Motor neuron (in vitro differentiated cells): ENCODE measurements at regions of chrX and their contacts with region 1.

Region 1: DNA sequence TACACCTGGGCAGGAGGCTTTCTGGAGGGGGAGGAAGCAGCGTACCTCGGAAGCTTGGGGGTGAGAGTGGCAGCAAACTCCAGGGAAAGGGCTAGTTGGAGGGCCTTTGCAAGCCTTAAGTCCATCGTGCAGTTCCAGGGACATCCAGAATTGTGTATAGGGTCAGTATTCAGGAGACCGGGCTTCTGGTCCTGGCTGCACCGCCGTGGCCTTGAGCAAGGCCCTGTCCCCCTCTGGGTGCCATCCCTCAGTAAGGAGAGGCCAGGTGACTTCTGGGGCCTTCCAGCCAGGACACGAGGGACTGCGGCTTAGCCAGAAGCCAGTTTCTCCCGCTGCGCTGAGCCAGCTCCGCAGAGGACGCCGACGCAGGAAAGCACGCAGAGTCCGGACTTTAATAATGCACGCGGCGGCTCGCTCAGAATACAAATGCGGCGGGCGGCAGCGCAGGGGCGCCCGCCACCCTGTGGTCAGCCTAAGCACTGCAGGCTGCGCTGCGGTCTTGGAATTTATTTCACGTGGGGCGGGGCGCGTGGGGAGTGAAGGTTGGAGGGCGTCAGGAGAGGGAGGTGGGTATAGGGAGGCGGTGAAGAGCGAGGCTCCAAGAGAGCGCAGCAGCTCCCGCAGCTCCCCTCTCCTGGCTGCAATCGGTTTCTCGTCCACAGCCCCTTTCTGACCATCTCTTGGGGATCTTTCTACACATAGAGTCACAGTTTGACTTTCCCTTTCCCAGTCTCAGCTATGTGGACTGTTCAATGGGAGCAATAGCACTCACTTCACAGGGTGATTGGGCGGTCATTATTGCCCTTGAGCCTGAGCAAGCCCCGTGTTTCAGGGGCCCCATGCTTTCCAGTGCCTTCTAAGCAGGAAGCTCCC is 94.1 kb upstream of the GPR50 start:
- ATAC-seq: peak; percentile 92 to 98 (median 96)
- H3K4me3 ChIP-seq: peak overlapping the region in 3 of 5 donors; percentile 6 to 14 (median 11)
- H3K27ac ChIP-seq: peak overlapping the region in 1 of 2 donors; percentile 79
- H3K4me1 ChIP-seq: peaks cover 18 to 24% of the 10 kb centered on the region in 2 donors

Region 2: GRCh38 chrX:150772150-150772970 is 310.0 kb before region 1 on chrX:
- in situ Hi-C with region 1: loop called in 5 of 9 experiments (anchors 10 to 25 kb)
- ATAC-seq: peak; percentile 95 to 99 (median 98)
- H3K4me3 ChIP-seq: no peak overlapping the region
- H3K27ac ChIP-seq: no peak overlapping the region
- H3K4me1 ChIP-seq: no peaks in the 10 kb centered on the region

Region 3: DNA sequence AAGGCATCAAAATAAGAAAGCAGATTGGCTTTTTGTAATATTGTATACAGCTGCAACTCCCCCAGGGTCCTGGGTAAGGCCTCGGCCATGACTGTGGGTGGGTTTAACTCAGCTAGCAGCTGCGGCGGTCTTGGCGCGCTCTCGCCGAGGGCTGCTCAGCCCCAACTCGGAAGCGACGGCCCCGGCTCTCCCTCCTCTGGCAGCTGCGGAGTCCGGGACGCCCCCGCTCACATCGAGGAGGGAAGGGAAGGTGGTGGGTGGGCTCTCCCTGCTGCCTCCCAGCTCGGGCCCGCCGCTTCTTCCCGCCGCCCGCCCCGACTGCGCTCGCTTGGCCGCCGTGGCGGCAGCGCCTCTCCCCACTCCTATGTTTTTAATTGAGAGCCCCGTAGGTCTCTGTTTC is 145.3 kb after region 1 on chrX:
- in situ Hi-C with region 1: no loop called
- ATAC-seq: no peak
- H3K4me3 ChIP-seq: no peak overlapping the region
- H3K27ac ChIP-seq: no peak overlapping the region
- H3K4me1 ChIP-seq: no peaks in the 10 kb centered on the region

Region 4: GRCh38 chrX:151552743-151553142 is 470.4 kb after region 1 on chrX:
- in situ Hi-C with region 1: no loop called
- ATAC-seq: peak in 3 of 8 experiments; percentile 25 to 74 (median 36)
- H3K4me3 ChIP-seq: no peak overlapping the region
- H3K27ac ChIP-seq: no peak overlapping the region
- H3K4me1 ChIP-seq: no peaks in the 10 kb centered on the region